ENCODE measurements at regions of chr10 and their contacts with region 1.

Region 1: DNA sequence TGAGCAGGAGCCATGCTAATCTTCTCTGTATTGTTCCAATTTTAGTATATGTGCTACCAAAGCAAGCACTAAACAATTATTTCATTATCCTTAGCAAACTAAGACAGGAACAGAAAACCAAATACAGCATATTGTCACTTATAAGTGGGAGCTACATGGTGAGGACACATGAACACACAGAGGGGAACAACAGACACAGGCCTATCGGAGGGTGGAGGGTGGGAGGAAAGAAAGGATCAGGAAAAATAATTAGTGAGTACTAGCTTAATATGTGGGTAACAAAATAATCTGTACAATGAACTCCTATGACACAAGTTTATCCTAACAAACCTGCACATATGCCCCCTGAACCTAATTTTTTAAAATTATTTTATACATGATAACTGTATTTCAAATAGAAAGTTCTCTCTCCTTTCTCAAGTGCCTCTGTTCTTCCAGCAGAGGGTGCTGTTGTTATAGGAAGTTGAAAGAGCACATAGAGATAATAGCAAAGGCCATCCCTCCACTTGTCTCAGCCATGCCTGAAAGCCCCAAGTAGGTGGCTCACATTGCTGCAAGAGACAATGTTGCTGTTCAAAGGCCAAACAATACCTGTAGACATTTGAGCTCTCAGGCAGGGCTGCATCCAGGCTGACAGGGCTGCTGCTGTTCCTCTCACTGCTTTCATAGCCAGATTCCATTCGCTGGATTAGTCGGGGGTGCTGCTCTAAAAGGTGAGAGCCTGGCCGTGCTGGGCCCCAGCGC is 33.4 kb upstream of the PPP3CB start:
- DNase-seq: peak; percentile 58 to 80
- ATAC-seq: peak; percentile 98 to 99
- H3K4me3 ChIP-seq: no peak overlapping the region
- H3K27ac ChIP-seq: no peak overlapping the region
- H3K4me1 ChIP-seq: no peaks in the 10 kb centered on the region
- CTCF ChIP-seq: peak; percentile 93
- EP300 ChIP-seq: no peak
- POLR2A ChIP-seq: no peak
- RAD21 ChIP-seq: peak; percentile 92 to 96

Region 2: DNA sequence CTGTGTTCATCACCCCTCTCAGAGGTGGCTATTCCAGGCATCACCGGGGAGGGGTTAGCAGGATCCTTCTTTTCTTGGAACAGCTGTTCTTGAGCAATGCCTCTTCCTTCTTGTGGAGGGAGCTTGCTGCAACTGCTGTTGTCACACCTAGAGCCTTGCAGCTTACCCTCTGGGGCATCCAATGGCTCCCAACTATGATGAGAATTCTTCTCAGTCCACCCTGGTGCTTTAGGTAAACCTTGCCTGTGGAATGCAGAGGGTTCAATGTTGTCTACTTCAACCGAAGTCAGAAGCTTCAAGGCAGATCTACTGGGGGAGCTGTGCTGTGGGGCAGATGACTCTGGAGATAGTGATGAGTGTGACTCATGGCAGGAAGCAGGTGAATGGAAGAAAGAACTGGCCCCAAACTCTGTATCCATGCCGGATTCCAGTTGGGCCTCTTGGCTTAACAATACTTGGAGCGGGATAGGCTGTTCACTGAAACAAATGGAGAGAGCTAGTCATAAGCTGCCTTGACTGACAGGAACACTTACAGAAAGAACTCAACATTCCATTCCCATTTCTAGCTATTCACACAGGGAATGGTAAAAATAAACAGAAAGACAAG is 11.9 kb before region 1 on chr10:
- CTCF ChIA-PET with region 1: interaction called, 55 read pairs
- POLR2A ChIA-PET with region 1: no interaction called
- DNase-seq: no peak
- ATAC-seq: no peak
- H3K4me3 ChIP-seq: no peak overlapping the region
- H3K27ac ChIP-seq: no peak overlapping the region
- H3K4me1 ChIP-seq: no peaks in the 10 kb centered on the region
- CTCF ChIP-seq: no peak
- EP300 ChIP-seq: no peak
- POLR2A ChIP-seq: no peak
- RAD21 ChIP-seq: no peak

Region 3: GRCh38 chr10:73601486-73601921 is 72.2 kb after region 1 on chr10:
- CTCF ChIA-PET with region 1: interaction called, 12 read pairs
- POLR2A ChIA-PET with region 1: no interaction called
- DNase-seq: peak in 1 of 2 experiments; percentile 42
- ATAC-seq: peak; percentile 54 to 61
- H3K4me3 ChIP-seq: no peak overlapping the region
- H3K27ac ChIP-seq: no peak overlapping the region
- H3K4me1 ChIP-seq: peaks cover 7% of the 10 kb centered on the region; the same call in 2 of the 3 replicates
- CTCF ChIP-seq: no peak
- EP300 ChIP-seq: no peak
- POLR2A ChIP-seq: no peak
- RAD21 ChIP-seq: no peak

Region 4: DNA sequence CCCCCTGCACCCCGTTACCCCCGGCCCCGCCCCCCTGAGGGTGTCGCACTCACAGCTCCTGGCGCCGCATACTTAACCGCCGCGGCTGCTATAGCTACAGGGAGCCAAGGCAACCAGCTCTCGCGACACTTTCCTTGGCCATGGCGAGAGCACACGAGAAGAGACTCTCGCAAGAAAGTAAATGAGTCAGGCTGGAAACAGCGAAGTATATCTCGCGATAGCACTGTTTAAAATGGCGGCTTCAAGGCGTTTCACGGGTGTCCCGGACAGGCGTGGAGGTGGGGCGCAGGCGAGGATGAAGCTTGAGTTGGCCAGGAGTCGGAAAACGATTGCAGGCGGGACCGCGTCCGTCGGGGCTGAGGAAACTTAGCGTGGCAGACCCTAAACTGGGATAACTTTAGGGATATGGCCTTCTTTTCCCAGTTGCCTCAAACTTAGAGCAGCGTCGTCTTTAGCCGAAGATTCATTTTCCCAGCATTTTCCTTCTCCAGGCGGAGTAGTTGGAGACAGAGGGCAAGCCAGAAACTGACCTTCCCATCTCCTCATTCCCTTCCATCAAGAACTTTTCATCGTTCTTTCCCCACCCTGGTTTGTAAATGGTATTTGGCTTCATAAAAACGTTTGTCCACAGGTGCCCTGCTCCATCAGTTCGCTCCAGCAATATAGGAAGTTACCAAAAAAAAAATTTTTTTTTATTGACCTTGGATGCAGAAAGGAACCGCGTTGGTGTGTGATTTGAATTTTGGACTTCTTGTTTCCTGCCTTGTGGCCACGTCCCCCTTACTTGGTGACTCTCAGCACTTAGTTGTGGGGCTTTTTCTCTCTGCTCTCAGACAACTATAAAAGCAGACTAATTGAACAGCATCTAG is 96.9 kb after region 1 on chr10:
- CTCF ChIA-PET with region 1: interaction called, 34 read pairs
- POLR2A ChIA-PET with region 1: no interaction called
- DNase-seq: peak; percentile 98 to 99
- ATAC-seq: peak; percentile 98
- H3K4me3 ChIP-seq: peak overlapping the region; percentile 72
- H3K27ac ChIP-seq: peak overlapping the region; percentile 89 to 96
- H3K4me1 ChIP-seq: peaks cover 13% of the 10 kb centered on the region
- CTCF ChIP-seq: no peak
- EP300 ChIP-seq: no peak
- POLR2A ChIP-seq: peak; percentile 83
- RAD21 ChIP-seq: no peak

Region 5: DNA sequence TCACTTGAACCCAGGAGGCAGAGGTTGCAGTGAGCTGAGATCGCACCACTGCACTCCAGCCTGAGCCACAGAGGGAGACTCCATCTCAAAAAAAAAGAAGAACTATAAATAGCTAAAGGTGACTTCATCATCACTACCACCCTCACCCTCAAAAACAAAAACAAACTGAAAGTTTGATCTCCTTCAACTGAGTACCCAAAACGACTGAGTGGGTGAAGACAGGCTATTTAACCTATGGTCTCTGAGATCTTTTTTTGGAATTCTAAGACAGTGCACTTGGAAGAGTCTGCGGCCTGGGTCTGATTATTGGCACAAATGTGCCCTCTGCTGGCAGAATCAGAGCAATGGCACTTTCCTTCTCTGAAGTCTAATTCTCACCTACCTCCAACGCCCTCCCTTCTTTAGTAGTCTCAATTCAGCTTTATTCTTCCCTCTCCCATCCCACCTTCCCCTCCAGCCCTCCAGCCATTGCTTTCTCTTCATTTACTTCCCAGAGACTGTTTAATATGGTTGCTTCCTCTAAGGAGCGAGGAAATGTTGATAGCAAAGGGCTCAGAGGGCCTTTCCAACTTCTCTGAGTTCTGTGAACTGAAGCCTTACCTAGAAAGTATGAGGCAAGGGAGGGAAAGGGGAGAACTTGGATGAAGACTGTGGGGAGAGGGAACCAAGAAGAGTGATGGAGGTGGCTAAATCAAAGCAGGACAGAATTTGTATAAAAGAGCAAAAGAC is 114.9 kb after region 1 on chr10:
- CTCF ChIA-PET with region 1: interaction called, 378 read pairs
- POLR2A ChIA-PET with region 1: no interaction called
- DNase-seq: peak; percentile 71 to 81
- ATAC-seq: peak; percentile 86 to 88
- H3K4me3 ChIP-seq: no peak overlapping the region
- H3K27ac ChIP-seq: no peak overlapping the region
- H3K4me1 ChIP-seq: no peaks in the 10 kb centered on the region
- CTCF ChIP-seq: peak; percentile 93
- EP300 ChIP-seq: no peak
- POLR2A ChIP-seq: no peak
- RAD21 ChIP-seq: peak; percentile 95 to 98

Measured in A549 (cell line).